ENCODE measurements at regions of chr16 and their contacts with region 1.

Region 1: GRCh38 chr16:11356573-11357331 is 11.5 kb downstream of the RMI2 start:
- DNase-seq: no peak
- ATAC-seq: peak; percentile 42
- H3K4me3 ChIP-seq: no peak overlapping the region
- H3K27ac ChIP-seq: no peak overlapping the region
- H3K4me1 ChIP-seq: peaks cover 44% of the 10 kb centered on the region
- H3K27me3 ChIP-seq: no peaks in the 10 kb centered on the region
- CTCF ChIP-seq: peak; percentile 70 to 88 (median 74); a peak in 5 of 6 replicates
- EP300 ChIP-seq: no peak
- POLR2A ChIP-seq: no peak
- RAD21 ChIP-seq: peak; percentile 88

Region 2: DNA sequence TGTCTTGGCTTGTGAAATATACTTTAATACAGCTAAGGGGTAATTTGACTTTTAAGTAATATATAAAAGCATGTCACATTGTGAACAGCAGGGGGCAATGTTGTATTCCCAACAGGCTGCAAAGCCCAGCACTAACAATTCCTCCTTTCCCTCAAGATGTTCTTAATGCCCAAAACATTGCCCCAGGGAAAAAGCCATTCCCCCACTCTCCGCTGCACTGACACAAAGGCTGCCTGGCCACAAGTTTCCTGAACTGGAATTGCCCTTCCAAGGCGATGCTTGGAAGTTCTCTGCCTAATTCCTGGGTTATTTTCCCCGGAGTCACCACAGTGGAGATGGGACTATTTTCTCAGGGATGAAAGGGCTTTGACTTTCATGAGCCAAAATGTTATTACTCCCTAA is 385.2 kb before region 1 on chr16:
- CTCF ChIA-PET with region 1: interaction called, 40 read pairs
- POLR2A ChIA-PET with region 1: interaction called, 4 read pairs
- RAD21 ChIA-PET with region 1: interaction called, 37 read pairs
- SMC1A ChIA-PET with region 1: interaction called, 10 read pairs
- in situ Hi-C with region 1: loop called (anchors 5 kb)
- intact Hi-C with region 1: no loop called
- DNase-seq: no peak
- ATAC-seq: peak; percentile 68
- H3K4me3 ChIP-seq: no peak overlapping the region
- H3K27ac ChIP-seq: no peak overlapping the region
- H3K4me1 ChIP-seq: peaks cover 4% of the 10 kb centered on the region
- H3K27me3 ChIP-seq: no peaks in the 10 kb centered on the region
- CTCF ChIP-seq: peak; percentile 48 to 83 (median 68)
- EP300 ChIP-seq: no peak
- POLR2A ChIP-seq: no peak
- RAD21 ChIP-seq: peak; percentile 82

Region 3: DNA sequence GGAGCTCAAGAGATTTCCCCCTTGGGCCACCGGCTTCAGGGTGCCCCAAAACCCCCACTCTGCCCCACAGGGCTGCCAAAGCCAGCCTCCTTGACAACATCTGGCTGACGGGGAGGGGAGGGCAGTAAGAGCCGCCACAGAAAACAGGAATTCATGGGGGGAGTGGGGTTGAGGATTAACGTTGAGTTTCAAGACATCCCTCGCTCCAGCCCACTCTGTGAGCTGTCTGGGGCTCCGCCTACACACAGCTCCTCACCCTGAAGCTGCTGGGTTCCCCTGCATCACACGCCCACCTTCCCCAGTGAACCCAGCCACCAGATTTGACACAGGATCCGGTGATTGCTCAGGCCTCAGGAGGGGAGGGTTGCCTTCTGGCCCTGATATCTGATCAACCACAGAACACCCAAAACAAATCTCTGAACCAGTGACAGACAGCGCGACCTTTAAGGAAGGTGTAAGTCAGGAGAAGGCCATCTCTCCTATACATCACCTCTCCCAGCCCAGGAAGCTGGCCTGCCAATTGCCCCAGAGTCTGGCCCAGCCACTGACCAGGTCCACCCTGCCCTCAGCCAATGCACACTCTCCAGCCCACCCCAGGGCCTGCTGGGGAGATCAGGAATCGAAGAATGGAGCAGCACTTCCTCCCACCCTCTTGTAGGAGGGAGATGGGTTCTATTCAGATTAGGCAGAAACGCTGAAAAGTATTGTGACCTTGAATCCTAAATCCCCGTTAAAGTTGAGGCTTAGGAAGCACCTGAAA is 280.3 kb before region 1 on chr16:
- CTCF ChIA-PET with region 1: interaction called, 5 read pairs
- POLR2A ChIA-PET with region 1: no interaction called
- RAD21 ChIA-PET with region 1: interaction called, 3 read pairs
- SMC1A ChIA-PET with region 1: interaction called, 4 read pairs
- in situ Hi-C with region 1: no loop called
- intact Hi-C with region 1: loop called (anchors 10 kb)
- DNase-seq: peak; percentile 79
- ATAC-seq: peak; percentile 64
- H3K4me3 ChIP-seq: no peak overlapping the region
- H3K27ac ChIP-seq: peak overlapping the region; percentile 65
- H3K4me1 ChIP-seq: peaks cover 46% of the 10 kb centered on the region
- H3K27me3 ChIP-seq: no peaks in the 10 kb centered on the region
- CTCF ChIP-seq: no peak
- EP300 ChIP-seq: 0 out of 4 replicates have a peak, but pooled peaks of 1 of the 2 experiments have one; percentile 10
- POLR2A ChIP-seq: no peak
- RAD21 ChIP-seq: no peak

Region 4: GRCh38 chr16:11201498-11202259 is 155.1 kb before region 1 on chr16:
- CTCF ChIA-PET with region 1: interaction called, 3 read pairs
- POLR2A ChIA-PET with region 1: no interaction called
- RAD21 ChIA-PET with region 1: interaction called, 9 read pairs
- SMC1A ChIA-PET with region 1: interaction called, 3 read pairs
- in situ Hi-C with region 1: no loop called
- intact Hi-C with region 1: loop called (anchors 1 kb)
- DNase-seq: no peak
- ATAC-seq: peak; percentile 5
- H3K4me3 ChIP-seq: no peak overlapping the region
- H3K27ac ChIP-seq: peak overlapping the region; percentile 45
- H3K4me1 ChIP-seq: peaks cover 67% of the 10 kb centered on the region
- H3K27me3 ChIP-seq: no peaks in the 10 kb centered on the region
- CTCF ChIP-seq: no peak
- EP300 ChIP-seq: peak in 1 of 2 experiments; percentile 28; a peak in 1 of 4 replicates
- POLR2A ChIP-seq: no peak
- RAD21 ChIP-seq: no peak

Region 5: DNA sequence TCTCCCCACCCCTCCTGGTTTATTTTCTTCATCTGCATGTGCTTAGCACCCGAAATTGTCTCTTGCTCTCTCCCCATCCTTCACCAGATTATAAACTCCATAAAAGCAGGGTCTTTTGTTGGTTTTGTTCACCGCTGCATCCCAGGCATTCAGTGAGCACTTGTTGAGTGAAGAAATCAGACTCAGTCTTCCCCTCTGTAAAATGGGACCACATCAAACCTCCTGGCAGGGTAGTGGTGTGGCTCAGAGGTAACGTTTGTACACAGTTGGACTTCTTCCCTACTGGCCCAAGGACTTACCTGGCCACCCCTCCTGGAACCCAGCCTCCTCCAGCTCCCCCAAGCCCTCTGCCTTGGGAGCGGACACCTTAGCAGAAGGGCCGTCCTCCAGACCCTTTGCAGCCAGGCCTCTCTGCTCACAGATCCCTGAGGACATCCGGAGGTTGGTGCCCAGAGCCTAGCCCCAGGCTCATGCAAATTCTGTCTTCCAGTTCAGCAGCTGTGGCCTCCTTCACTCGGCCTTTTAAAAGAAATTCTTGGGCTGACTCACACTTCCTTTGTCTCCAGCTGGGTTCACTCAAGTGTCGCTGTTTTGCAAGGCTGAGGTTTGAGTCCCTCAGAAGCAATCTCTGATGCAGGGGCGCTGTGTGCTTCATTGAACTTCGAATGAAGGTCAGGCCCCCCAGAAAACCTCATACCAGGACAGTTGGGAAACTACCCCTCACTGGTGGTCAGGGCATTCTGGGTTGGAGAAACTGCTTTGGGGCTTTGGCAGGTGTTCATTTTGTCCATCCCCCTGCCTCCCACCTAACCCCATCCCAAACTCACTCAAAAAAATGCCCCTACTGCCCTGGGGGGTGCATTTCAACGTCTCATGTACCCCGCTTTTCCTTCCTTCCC is 28.3 kb before region 1 on chr16:
- CTCF ChIA-PET with region 1: interaction called, 18 read pairs
- POLR2A ChIA-PET with region 1: interaction called, 16 read pairs
- RAD21 ChIA-PET with region 1: interaction called, 77 read pairs
- SMC1A ChIA-PET with region 1: interaction called, 40 read pairs
- in situ Hi-C with region 1: no loop called
- intact Hi-C with region 1: loop called (anchors 1 kb)
- DNase-seq: peak; percentile 95
- ATAC-seq: peak; percentile 84
- H3K4me3 ChIP-seq: peak overlapping the region; percentile 56
- H3K27ac ChIP-seq: peak overlapping the region; percentile 89
- H3K4me1 ChIP-seq: peaks cover 48% of the 10 kb centered on the region
- H3K27me3 ChIP-seq: no peaks in the 10 kb centered on the region
- CTCF ChIP-seq: peak in 2 of 3 experiments; percentile 4 to 6; a peak in 1 of 6 replicates
- EP300 ChIP-seq: peak; percentile 59 to 93
- POLR2A ChIP-seq: peak; percentile 78
- RAD21 ChIP-seq: peak; percentile 23; the same call in 1 of the 2 replicates

Region 6: DNA sequence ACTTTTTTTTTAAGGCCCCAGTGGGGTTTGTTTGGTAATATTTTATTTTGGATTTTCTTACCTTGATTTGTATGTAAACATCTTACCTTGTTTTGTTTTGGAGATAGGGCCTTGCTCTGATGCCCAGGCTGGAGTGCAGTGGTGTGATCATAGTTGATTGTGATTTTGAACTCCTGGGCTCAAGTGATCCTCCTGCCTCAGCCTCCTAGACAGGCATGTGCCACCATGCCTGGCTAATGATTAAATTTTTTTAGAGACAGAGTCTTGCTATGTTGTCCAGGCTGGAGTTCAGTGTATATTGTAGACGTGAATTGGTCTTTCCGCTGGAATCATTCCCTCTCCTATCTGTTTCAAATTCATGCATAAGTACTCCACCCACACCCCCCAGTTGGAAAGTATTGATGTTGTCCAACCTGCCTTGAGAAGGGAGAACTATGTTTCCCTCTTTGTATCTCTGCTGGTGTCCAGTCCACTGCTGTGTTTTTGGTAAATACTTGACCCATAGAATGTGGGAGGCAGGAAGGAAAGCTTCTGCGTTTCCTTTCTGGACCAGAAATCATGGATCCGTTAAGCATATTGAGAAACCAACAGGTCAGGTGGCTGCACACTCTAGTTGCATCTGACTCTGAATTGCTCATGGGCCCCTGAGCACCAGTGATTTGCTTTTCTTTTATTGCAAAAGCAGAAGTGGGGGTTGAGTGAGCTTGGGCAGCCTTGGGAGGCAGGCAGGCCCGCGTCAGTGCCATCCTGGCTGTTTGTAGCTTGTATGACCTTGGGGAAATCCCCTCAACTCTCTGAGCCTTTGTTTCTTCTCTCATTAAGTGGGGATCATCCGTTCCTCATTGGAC is 13.6 kb after region 1 on chr16:
- CTCF ChIA-PET with region 1: interaction called, 65 read pairs
- POLR2A ChIA-PET with region 1: interaction called, 14 read pairs
- RAD21 ChIA-PET with region 1: interaction called, 58 read pairs
- SMC1A ChIA-PET with region 1: interaction called, 24 read pairs
- in situ Hi-C with region 1: no loop called
- intact Hi-C with region 1: no loop called
- DNase-seq: peak; percentile 57
- ATAC-seq: peak; percentile 93
- H3K4me3 ChIP-seq: no peak overlapping the region
- H3K27ac ChIP-seq: no peak overlapping the region
- H3K4me1 ChIP-seq: peaks cover 15% of the 10 kb centered on the region
- H3K27me3 ChIP-seq: no peaks in the 10 kb centered on the region
- CTCF ChIP-seq: no peak
- EP300 ChIP-seq: no peak
- POLR2A ChIP-seq: no peak
- RAD21 ChIP-seq: no peak

Region 7: DNA sequence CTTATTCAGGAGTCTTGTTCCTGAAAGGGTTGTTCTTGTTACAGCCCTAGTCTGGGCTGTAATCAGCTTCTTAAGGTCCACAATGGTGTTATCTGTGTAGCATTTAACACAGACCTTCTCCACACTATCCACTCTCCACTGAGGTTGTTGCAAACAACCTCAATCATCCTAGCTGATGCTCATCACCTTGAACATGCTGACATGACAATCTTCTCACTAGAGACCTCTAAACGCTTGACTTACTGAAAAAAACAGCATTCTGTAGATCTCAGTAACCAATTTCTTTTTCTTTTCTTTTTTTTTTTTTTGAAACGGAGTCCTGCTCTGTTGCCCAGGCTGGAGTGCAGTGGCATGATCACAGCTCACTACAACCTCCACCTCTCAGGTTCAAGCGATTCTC is 611.8 kb after region 1 on chr16:
- CTCF ChIA-PET with region 1: no interaction called
- POLR2A ChIA-PET with region 1: no interaction called
- RAD21 ChIA-PET with region 1: no interaction called
- SMC1A ChIA-PET with region 1: no interaction called
- in situ Hi-C with region 1: no loop called
- intact Hi-C with region 1: no loop called
- DNase-seq: no peak
- ATAC-seq: no peak
- H3K4me3 ChIP-seq: peak overlapping the region; percentile 70; the same call in 1 of the 2 replicates
- H3K27ac ChIP-seq: no peak overlapping the region
- H3K4me1 ChIP-seq: peaks cover 23% of the 10 kb centered on the region
- H3K27me3 ChIP-seq: no peaks in the 10 kb centered on the region
- CTCF ChIP-seq: no peak
- EP300 ChIP-seq: no peak
- POLR2A ChIP-seq: no peak
- RAD21 ChIP-seq: no peak